Activated CD4-positive, alpha-beta T cell treated with anti-CD3 and anti-CD28 coated beads for 36 hours (primary cell): ENCODE measurements at regions of chrX and their contacts with region 1.

Region 1: GRCh38 chrX:154308108-154308946 is 12.7 kb downstream of the TKTL1 start:
- DNase-seq: peak; percentile 88
- ATAC-seq: peak; percentile 69
- H3K4me3 Mint-ChIP-seq: no peak overlapping the region
- H3K27ac Mint-ChIP-seq: peak overlapping the region; percentile 34
- H3K4me1 Mint-ChIP-seq: peaks cover 42% of the 10 kb centered on the region
- H3K27me3 Mint-ChIP-seq: no peaks in the 10 kb centered on the region

Region 2: GRCh38 chrX:154121891-154122331 is 186.4 kb before region 1 on chrX:
- CTCF ChIA-PET with region 1: no interaction called
- POLR2A ChIA-PET with region 1: no interaction called
- intact Hi-C with region 1: no loop called
- DNase-seq: no peak
- ATAC-seq: no peak
- H3K4me3 Mint-ChIP-seq: no peak overlapping the region
- H3K27ac Mint-ChIP-seq: no peak overlapping the region
- H3K4me1 Mint-ChIP-seq: peaks cover 21% of the 10 kb centered on the region
- H3K27me3 Mint-ChIP-seq: no peaks in the 10 kb centered on the region

Region 3: DNA sequence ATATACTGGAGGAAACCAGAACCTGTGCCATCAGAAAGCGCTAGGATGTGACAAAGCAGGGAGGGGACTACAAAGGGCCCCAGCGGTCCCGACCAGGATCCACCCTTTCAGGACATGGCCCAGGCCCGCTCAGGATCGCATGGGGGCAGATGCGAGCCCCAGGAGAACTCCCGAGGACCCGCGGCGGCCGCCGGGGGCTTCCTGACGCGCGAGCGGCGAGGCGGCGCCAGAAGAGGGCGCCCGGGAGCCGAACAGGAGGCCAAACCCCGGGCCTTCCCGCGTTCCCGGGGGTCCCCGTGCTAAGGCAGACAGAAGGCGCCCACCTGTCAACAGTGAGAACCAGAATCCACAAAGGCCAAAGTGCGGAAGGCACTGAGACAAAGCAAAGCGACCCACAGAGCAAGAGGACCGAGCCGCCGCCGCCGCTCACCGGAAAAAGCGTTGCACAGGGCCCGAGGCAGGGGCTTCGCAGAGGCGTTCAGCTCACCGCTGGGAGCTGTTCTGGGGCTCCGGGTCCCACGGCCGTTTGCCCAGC is 171.6 kb before region 1 on chrX:
- CTCF ChIA-PET with region 1: interaction called, 8 read pairs
- POLR2A ChIA-PET with region 1: no interaction called
- intact Hi-C with region 1: loop called in 1 of 2 experiments (anchors 1 kb)
- DNase-seq: peak; percentile 81
- ATAC-seq: peak; percentile 76
- H3K4me3 Mint-ChIP-seq: peak overlapping the region; percentile 61
- H3K27ac Mint-ChIP-seq: peak overlapping the region; percentile 93
- H3K4me1 Mint-ChIP-seq: peaks cover 17% of the 10 kb centered on the region
- H3K27me3 Mint-ChIP-seq: no peaks in the 10 kb centered on the region